ENCODE measurements at regions of chr14 and their contacts with region 1.

Region 1: DNA sequence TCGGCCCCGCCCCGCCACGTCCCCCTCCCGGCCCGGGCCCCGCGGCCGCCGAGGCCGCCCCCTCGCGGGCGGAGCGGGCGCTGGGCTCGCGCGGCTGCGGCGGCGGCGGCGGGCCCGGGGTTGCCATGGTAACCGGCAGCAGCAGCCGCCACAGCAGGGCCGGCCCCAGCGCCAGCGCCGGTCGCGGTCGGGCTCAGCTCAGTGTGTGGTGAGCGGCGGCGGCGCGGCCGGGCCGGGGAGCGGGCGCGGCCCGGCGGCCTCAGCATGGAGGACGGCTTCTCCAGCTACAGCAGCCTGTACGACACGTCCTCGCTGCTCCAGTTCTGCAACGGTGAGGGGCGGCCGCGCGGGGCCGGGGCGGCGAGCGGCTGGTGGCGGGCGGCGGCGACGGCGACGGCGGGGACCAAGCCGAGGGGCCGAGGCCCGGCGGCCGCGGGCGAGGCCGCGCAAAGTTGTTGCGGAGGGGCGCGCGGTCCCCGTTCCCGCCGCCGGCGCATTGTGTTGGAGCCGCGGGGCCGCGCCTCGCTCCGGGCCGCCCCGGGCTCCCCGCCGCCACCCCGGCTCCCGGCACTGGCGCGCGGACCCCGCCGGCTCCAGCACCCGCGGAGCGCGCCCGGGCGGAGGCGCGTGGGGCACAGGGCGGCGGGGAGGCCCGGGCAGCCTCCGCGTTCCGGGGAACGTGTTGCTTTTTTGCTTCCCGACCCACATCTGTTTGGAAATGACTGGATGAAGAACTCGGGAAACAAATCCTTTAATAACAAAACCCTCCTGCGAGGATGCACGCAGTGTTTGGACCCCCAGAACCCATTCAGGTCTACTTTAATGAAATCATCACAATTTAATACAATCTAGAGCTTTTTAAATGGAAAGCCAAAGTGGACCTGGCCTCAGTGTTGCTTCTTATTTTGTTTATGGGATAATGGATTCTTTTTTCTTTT is at the start of gene EML1:
- DNase-seq: peak; percentile 86
- ATAC-seq: peak; percentile 85
- H3K4me3 Mint-ChIP-seq: peak within 1 kb of the TSS; percentile 55
- H3K27ac Mint-ChIP-seq: peak within 1 kb of the TSS; percentile 32
- H3K4me1 Mint-ChIP-seq: peaks cover 34% of the 10 kb centered on the region
- H3K27me3 Mint-ChIP-seq: peaks cover 23% of the 10 kb centered on the region
- total RNA-seq, gene EML1: 1.7 TPM

Region 2: DNA sequence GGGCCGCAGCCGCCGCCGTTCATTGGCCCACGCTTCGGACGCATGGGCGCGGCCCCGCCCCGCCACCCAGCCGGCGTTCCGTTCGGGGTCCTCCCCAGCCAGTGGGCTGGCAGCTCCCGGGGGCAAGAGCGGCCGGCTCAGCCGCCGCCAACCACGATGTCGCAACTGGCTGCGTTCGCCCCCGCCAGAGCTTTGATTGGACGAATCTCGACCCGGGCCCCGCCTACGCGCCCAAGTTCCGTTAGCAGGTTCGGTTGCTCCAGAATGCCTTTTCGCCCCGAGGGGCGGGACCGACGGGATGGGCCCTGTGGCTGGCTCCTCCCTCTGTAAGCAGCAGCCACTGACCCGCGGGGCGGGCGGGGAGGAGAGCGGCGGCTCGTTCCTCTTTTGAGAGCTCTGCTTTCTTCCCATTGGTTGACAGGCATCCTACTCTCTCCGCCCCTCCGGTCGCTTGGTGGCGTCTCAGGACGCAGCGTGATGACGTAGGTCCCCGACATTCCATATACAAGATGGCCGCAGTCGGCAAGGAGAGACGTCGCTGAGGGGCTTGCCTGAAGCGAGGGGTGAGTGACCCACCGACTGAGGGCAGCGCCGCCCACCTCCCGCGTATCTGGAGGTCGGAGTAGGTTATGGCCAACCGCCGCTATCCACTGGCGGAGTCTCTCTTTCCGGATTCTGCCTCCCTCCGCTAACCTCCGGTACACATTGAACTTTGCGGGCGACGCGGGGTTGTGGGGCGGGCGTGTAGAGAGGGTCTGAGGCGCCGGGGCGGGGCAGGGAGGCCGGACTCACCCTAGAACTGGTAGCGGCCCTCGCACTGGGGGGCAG is 312.4 kb before region 1 on chr14 and contains the start of gene CCNK:
- CTCF ChIA-PET with region 1: no interaction called
- POLR2A ChIA-PET with region 1: no interaction called
- intact Hi-C with region 1: loop called in 1 of 2 experiments (anchors 2 kb)
- DNase-seq: peak; percentile 100
- ATAC-seq: peak; percentile 95
- H3K4me3 Mint-ChIP-seq: peak within 1 kb of the TSS; percentile 97
- H3K27ac Mint-ChIP-seq: peak within 1 kb of the TSS; percentile 96
- H3K4me1 Mint-ChIP-seq: peaks cover 58% of the 10 kb centered on the region
- H3K27me3 Mint-ChIP-seq: no peaks in the 10 kb centered on the region
- total RNA-seq, gene CCNK: 93.7 to 96.2 TPM

Region 3: GRCh38 chr14:99604283-99604765 is 189.2 kb before region 1 on chr14:
- CTCF ChIA-PET with region 1: no interaction called
- POLR2A ChIA-PET with region 1: no interaction called
- intact Hi-C with region 1: loop called in 1 of 2 experiments (anchors 2 kb)
- DNase-seq: peak; percentile 96
- ATAC-seq: peak; percentile 94
- H3K4me3 Mint-ChIP-seq: peak overlapping the region; percentile 72
- H3K27ac Mint-ChIP-seq: peak overlapping the region; percentile 72
- H3K4me1 Mint-ChIP-seq: peaks cover 28% of the 10 kb centered on the region
- H3K27me3 Mint-ChIP-seq: peaks cover 2% of the 10 kb centered on the region

Region 4: DNA sequence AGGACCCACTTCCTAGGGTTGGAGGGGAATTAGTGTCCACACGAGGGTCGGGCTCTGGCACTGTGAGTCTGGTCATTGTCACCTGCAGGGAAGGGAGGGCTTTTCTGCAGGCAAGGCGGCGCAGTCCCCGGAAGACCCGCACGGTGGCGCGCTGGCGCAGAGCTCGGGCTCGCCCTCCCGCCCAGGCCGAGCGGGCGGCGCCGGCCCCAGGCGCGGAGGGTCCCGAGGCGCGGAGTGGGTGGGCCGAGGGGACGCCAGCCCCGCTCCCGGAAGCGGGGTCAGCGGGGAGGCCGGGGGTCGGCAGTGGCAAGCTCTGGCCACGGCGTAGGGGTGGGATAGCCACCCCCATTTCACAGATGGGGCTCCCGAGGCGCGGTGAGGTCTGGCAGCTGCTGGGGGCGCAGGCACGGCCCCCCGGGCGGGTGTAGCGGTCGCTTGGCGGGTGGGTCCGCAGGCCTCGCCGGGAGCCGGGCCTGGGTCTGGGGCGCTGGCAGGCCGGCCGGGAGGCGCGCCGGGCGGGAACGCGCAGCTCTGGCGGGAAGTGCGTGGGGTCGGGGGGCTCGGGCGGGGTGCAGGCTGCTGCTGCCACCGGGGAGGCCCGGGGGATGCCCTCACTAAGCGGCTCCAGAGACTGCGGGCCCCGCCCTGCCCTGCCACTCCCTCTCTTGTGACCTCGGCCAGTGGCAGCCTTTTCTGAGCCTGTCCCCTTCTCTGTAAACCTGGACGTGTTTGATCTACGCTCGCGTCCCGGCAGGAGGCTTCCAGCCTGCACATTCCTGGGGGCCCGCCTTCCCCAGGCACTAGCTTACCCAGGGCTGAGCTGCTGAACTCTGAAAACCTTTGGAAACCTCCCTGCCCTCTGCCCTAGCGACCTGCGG is 63.3 kb before region 1 on chr14:
- CTCF ChIA-PET with region 1: interaction called, 3 read pairs
- POLR2A ChIA-PET with region 1: no interaction called
- intact Hi-C with region 1: loop called in 1 of 2 experiments (anchors 1 kb)
- DNase-seq: peak; percentile 85
- ATAC-seq: peak; percentile 90
- H3K4me3 Mint-ChIP-seq: peak overlapping the region; percentile 30
- H3K27ac Mint-ChIP-seq: no peak overlapping the region
- H3K4me1 Mint-ChIP-seq: no peaks in the 10 kb centered on the region
- H3K27me3 Mint-ChIP-seq: peaks cover 20% of the 10 kb centered on the region

Region 5: DNA sequence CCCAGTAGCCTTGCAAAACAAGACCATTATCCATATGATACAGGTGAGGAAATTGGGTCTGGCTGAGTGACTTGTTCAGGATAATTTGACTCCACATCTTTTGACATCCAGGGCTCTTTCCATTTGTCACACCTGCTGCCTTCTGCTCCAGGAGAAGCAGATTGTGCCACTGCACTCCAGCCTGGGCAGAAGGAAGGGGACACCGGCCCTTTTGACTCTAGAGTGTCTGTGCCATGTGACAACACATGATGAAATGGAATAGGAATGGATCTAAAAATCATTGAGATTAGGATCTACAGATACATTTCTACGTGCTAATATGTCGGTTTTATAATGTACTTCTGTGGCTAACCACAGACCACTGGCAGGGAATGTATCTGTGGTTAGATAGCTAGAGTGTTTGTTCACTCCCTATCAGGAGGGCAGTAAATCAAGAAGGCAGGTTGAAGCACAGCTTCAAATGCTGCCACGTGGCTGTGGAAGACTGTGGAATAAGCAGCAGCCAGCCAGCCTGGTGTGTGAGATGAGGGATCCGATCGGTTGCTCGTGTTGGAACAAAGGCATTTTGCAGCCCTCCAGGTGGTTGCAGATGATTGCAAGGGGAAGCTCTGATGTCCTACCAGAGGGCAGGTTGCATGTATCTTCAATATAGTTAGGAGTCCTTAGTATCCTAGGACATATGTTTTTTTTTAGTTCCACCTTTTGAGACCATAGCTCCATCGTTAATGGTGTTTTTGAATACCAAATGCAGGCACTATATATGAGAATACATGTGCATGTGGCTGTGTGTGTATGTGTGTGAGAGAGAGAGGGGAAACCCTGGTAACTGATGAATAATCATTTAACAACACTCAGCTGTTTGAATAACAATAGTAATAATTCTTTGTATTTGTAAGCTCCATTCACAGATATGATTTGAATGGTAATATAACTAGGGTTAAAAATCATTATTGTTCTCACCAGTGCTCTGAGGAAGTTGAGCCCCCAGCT is 28.3 kb after region 1 on chr14:
- CTCF ChIA-PET with region 1: no interaction called
- POLR2A ChIA-PET with region 1: interaction called, 3 read pairs
- intact Hi-C with region 1: loop called in 1 of 2 experiments (anchors 2 kb)
- DNase-seq: peak; percentile 33
- ATAC-seq: peak; percentile 55
- H3K4me3 Mint-ChIP-seq: no peak overlapping the region
- H3K27ac Mint-ChIP-seq: no peak overlapping the region
- H3K4me1 Mint-ChIP-seq: peaks cover 25% of the 10 kb centered on the region
- H3K27me3 Mint-ChIP-seq: peaks cover 34% of the 10 kb centered on the region

Region 6: GRCh38 chr14:99971087-99971940 is 177.8 kb after region 1 on chr14:
- CTCF ChIA-PET with region 1: no interaction called
- POLR2A ChIA-PET with region 1: no interaction called
- intact Hi-C with region 1: loop called in 1 of 2 experiments (anchors 1 kb)
- DNase-seq: peak; percentile 93
- ATAC-seq: peak; percentile 87
- H3K4me3 Mint-ChIP-seq: peak overlapping the region; percentile 98
- H3K27ac Mint-ChIP-seq: no peak overlapping the region
- H3K4me1 Mint-ChIP-seq: peaks cover 21% of the 10 kb centered on the region
- H3K27me3 Mint-ChIP-seq: peaks cover 21% of the 10 kb centered on the region

Region 7: DNA sequence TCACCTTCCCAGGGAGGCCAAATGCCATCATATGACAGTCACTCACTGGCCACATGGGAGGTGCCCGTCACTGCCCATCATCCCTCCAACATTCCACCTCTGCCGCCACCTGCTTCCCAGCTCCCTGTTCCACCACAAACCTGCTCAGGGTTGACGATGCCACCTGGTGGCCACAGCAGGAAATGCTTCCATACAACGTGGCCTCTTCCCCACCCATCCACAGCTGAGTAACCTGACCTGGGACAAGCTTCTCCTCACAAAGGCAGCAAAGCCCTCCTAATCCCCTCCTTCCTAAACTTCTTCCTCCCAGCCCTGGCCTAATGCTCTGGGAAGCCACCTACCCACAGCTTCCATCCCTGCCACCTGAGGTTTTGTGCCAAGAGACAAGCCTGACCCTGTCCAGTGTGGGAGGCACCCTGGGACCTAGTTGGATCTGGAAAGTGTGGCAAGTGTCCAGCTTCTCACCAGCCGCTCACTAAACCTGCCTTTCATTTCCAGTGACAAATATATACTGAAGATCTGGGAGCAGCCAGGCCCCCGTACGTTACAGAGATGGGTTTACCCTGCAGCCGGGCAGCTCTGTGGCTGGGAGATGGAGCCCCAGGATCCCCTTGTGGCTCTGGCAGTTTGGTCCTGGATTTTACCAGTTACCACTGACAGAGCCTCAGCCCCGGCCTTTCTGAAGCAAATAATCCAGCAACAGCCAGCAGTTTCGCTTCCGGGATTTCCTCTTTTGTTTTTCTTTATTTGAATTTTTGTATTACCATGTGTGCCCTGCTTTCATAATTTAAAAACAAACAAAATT is 361.8 kb after region 1 on chr14:
- CTCF ChIA-PET with region 1: no interaction called
- POLR2A ChIA-PET with region 1: no interaction called
- intact Hi-C with region 1: loop called in 1 of 2 experiments (anchors 10 kb)
- DNase-seq: peak; percentile 75
- ATAC-seq: no peak
- H3K4me3 Mint-ChIP-seq: no peak overlapping the region
- H3K27ac Mint-ChIP-seq: no peak overlapping the region
- H3K4me1 Mint-ChIP-seq: peaks cover 6% of the 10 kb centered on the region
- H3K27me3 Mint-ChIP-seq: peaks cover 15% of the 10 kb centered on the region